CD4-positive, alpha-beta T cell (primary cell): ENCODE measurements at regions of chr22 and their contacts with region 1.

Region 1: GRCh38 chr22:42520663-42521546 is 1.3 kb upstream of the RRP7A start:
- DNase-seq: peak in 1 of 14 experiments; percentile 29
- ATAC-seq: no peak
- H3K4me3 ChIP-seq: no peak overlapping the region
- H3K4me3 Mint-ChIP-seq: peak overlapping the region; percentile 90
- H3K27ac ChIP-seq: no peak overlapping the region
- H3K27ac Mint-ChIP-seq: no peak overlapping the region
- H3K4me1 ChIP-seq: peaks cover 19% of the 10 kb centered on the region
- H3K4me1 Mint-ChIP-seq: peaks cover 14% of the 10 kb centered on the region
- H3K27me3 ChIP-seq: no peaks in the 10 kb centered on the region
- H3K27me3 Mint-ChIP-seq: no peaks in the 10 kb centered on the region
- CTCF ChIP-seq: no peak

Region 2: GRCh38 chr22:42500161-42500835 is 20.6 kb before region 1 on chr22:
- CTCF ChIA-PET with region 1: no interaction called
- POLR2A ChIA-PET with region 1: no interaction called
- intact Hi-C with region 1: loop called in 1 of 2 experiments (anchors 2 kb)
- DNase-seq: peak; percentile 74 to 93 (median 83)
- ATAC-seq: peak; percentile 96
- H3K4me3 ChIP-seq: peak overlapping the region; percentile 54
- H3K4me3 Mint-ChIP-seq: peak overlapping the region; percentile 77
- H3K27ac ChIP-seq: no peak overlapping the region
- H3K27ac Mint-ChIP-seq: no peak overlapping the region
- H3K4me1 ChIP-seq: peaks cover 21% of the 10 kb centered on the region
- H3K4me1 Mint-ChIP-seq: peaks cover 8% of the 10 kb centered on the region
- H3K27me3 ChIP-seq: no peaks in the 10 kb centered on the region
- H3K27me3 Mint-ChIP-seq: no peaks in the 10 kb centered on the region
- CTCF ChIP-seq: no peak

Region 3: DNA sequence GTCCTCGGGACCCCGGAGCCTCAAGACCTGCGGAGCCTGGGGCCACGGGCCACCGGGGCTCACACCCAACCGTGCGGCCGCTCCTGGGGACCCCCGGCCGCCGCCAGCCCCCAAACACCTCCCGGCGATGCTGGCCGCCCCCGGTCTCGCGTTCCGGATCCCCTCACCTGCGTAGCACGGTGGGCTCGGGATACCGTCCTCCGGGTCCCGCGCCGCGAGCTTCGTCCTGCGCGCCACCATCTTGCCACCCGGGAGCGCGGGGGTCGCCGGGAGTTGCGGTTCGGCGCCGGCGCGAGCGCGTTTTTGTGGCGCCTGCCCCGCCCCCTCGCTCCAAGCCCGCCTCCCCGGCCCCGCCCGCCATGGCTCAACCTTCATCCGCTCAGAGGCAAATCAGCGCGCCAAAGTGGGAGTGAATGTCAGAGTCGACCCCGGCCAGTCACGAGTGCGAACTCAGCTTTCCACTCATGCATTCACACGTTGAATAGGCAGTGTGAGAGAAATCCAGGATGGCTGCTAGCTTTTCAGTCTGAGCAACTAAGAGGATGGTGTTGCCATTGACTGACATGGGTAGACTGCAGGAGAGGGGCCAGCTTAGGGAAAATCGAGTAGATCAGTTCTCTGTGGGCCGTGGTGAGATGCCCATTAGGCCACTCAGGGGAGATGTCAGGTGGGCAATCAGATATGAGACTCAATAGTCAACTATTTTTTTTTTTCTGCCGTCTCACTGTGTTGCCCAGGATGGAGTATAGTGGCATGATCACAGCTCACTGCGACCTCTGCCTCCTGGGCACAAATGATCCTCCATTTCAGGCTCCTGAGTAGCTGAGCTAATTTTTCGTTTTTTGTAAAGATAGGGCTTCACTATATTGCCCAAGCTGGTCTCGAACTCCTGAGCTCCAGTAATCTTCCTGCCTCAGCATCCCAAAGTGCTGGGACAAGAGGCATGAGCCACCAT is 61.1 kb after region 1 on chr22:
- CTCF ChIA-PET with region 1: no interaction called
- POLR2A ChIA-PET with region 1: no interaction called
- intact Hi-C with region 1: loop called in 1 of 2 experiments (anchors 2 kb)
- DNase-seq: peak; percentile 66 to 92 (median 80)
- ATAC-seq: peak; percentile 88
- H3K4me3 ChIP-seq: peak overlapping the region; percentile 55
- H3K4me3 Mint-ChIP-seq: peak overlapping the region; percentile 99
- H3K27ac ChIP-seq: no peak overlapping the region
- H3K27ac Mint-ChIP-seq: peak overlapping the region; percentile 91
- H3K4me1 ChIP-seq: peaks cover 12% of the 10 kb centered on the region
- H3K4me1 Mint-ChIP-seq: peaks cover 12% of the 10 kb centered on the region
- H3K27me3 ChIP-seq: no peaks in the 10 kb centered on the region
- H3K27me3 Mint-ChIP-seq: no peaks in the 10 kb centered on the region
- CTCF ChIP-seq: no peak